ENCODE measurements at regions of chr22 and their contacts with region 1.

Region 1: GRCh38 chr22:24146194-24146616 is 35.1 kb upstream of the SUSD2 start:
- DNase-seq: no peak

Region 2: DNA sequence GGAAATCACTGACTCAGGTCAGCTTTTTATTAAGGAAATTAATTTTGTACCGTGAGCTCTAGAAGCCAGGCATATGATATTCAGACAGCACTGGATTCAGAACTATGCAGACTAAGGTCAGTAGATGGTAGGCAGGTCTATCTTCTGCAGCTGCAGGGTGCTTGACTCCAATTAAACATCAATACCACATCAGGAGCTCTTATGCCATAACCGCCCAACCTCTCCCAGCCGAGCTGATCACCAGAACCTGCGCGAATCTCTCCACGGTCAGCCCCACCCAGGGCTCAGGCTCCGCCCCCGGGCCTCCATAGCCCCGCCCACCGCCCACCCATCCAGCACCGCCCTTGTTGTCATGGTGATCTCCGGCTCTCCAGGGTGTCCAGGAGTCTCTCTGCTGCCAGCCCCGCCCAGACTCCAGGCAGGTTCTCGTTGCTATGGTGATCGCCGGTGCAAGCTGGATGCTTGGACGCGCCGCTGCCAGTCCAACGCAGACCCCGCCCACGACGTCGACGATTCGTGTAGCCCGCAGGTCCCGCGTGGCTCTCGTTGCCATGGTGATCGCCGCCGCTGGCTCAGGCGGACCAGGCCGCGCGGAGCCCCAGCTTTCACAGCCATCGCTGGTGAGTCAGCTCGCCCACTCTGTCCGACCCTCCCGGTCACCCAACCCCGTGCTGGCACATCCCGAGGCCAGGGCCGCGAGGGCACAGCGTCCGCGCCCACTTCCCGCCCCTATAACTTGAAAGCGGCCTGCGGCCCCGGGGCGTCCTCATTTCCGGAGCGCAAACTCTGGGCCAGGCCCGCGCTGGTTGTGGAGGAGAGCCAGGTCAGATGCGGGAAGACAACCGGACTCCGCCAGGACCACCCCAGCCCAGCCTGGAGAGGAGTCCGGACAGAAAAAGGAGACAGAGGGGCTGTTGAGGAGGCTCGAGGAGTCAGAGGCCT is 1001.0 kb before region 1 on chr22 and contains the start of gene RAB36:
- intact Hi-C with region 1: loop called in 1 of 2 experiments (anchors 10 kb)
- DNase-seq: peak; percentile 99
- total RNA-seq, gene RAB36: 4.2 to 5.1 TPM

Region 3: DNA sequence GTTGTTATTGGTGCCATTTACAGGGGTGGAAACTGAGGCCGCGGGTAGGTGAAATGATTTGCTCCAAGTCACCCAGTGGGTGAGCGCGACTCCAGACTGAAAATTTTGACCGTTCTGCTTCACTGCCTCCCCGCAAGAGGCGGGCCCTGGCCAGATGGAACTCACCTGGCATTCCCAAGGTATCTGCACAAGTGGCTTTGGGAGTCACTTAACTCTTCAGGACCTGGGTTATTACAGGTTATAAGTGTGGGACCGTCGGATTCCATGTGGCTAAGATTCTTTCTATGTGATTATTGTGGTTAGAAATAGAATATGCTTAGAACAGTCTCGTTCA is 134.5 kb before region 1 on chr22:
- intact Hi-C with region 1: loop called in 1 of 2 experiments (anchors 10 kb)
- DNase-seq: no peak

Region 4: DNA sequence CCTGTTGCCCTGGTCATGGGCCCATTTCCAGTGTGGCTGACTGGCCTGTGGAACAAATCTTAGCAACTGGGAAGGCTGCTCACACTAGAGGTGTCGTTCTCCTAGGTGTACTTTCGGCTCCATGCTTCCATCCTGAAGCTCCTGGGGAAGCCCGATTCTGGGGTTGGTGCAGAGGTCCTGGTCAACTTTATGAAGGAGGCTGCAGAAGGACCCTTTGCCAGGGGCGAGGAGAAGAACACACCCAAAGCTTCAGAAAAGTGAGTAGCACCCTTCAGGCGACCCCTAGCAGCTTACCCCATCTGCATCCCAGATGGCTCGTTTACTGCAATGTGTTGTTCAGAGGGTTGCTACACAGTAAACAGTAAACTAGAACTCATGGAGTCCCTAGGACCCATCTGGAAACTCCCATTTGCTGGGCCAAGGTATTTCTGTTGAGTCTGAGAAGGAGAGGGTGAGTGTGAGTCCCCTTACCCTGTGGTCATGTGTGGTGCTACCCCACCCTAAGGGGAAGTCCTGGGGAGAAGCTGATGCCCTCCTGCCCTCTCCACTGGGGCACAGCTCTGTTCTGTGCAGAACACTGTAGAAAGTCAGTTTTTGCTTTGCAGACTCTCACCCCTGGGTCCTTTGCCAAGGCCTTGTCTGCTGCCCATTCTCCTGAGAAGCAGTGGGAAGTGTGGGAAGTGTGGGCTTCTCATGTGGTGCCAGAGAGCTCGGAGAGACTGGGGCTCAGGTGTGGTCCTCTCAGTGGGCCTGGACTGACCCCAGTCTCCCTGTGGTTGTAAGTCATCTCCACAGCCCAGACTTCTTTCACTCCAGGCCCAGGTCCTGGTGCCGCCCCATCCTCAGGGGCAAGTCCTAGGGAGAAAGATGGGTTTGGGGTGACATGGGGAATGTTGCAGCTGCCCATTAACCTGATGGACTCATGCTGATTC is 50.1 kb before region 1 on chr22:
- intact Hi-C with region 1: loop called in 1 of 2 experiments (anchors 1 kb)
- DNase-seq: peak; percentile 45

Region 5: DNA sequence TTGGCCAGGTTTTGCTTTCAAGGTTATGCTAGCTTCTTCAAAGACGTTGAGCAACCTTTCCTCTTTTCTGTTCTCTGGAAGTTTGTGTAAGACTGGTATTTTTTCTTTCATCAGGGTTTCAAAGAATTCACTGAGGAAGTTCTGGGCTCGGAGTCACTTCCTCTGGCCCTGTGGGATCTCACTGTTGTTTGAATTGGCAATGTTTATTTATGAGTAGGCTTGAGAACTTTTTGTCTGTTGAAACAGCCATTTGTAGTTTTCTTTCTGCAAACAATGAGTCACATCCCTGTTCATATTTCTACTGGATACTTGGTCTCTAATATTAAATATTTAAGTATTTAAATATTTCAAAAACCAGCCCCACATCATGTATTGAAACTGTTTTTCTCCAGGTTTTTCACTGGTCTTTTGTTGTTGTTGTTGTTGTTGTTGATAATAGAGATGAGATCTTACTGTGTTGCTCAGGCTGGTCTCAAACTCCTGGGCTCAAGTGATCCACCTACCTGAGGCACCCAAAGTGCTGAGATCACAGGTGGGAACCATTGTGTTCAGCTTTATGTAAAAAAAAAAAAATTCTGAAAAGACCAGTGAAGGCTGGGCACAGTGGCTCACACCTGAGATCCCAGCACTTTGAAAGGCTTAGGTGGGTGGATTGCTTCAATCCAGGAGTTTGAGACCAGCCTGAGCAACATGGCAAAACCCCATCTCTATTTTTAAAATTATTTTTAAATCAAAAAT is 62.0 kb after region 1 on chr22:
- intact Hi-C with region 1: no loop called
- DNase-seq: no peak